GM23248 (cell line): ENCODE measurements at regions of chr12 and their contacts with region 1.

Region 1: DNA sequence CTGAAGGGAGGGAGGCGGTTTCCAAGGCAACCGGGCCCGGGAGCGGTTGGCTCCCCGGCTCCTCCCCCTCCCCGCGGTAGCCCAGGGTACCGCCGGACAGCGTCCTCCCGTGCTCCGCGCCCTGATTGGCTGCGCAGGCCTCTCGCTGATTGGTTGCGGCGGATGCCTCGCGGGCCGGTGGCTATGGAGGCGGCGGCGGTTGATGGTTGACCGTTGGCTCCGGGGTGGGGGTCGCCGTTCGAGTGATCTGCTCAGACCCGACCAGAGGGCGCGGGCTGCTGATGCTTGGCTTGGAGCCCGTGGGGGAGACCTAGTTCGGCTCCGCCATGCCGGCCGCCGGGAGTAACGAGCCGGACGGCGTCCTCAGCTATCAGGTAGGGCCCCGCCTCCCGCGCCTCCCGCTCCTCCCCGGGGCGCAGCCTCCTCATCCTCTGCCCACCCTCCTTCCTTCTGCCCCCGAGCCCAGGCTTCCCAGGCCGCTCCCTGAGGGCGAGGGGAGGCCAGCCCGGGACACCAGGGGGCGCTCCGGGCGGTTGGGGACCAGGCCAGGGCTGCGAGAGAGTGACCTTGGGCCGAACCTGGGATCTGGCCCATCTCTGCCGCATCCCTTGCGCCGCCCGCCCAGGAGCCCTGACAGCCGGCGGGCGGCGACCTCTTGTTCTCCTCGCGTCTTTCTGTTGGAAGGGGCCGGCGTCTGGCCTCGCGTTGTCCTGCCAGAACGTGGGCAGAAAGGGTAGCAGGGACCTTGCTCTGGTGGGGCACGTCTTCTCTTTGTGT is at the start of gene SLC4A8:
- DNase-seq: peak; percentile 95
- H3K4me3 ChIP-seq: peak within 1 kb of the TSS; percentile 74
- H3K27ac ChIP-seq: peak within 1 kb of the TSS; percentile 39
- H3K4me1 ChIP-seq: peaks cover 6% of the 10 kb centered on the region; the same call in 1 of the 2 replicates
- H3K27me3 ChIP-seq: no peaks in the 10 kb centered on the region
- total RNA-seq, gene SLC4A8: 2.6 and 4.3 TPM in 2 replicates

Region 2: DNA sequence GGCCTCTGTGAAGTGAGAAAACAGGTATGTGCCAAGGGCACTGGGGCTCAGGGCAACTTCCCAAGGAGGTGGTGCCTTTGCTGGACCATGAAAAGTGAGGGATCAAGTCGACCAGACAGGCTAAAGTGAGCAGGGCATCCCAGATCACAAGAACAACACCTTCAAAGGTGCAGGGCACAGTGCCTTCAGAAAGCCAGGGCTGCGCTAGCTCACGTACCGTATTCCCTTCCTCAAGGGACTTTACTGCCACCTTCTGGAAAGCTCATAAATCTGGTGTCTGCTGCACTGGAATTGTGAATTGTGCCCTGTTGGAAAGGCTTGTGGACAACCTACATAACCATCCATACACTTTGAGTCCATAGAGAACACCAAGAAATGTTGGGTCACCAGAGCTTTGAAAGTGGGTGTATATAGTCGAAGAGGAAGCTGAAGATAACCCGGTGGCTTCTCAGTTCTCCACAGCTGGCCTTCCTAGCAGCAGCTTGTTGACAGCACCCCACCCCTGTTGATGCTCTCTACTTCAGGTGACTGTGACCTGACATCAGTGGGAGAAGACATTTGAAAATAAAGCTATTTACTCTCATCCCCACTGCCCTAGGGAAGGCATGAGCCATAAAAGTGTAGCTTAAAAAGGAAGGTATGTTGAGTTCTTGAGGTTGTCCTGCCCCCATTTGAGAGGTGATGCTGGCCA is 399.2 kb after region 1 on chr12:
- in situ Hi-C with region 1: loop called (anchors 10 kb)
- DNase-seq: peak; percentile 81
- H3K4me3 ChIP-seq: no peak overlapping the region
- H3K27ac ChIP-seq: no peak overlapping the region
- H3K4me1 ChIP-seq: peaks cover 19% of the 10 kb centered on the region
- H3K27me3 ChIP-seq: no peaks in the 10 kb centered on the region